ENCODE measurements at regions of chr17 and their contacts with region 1.

Region 1: DNA sequence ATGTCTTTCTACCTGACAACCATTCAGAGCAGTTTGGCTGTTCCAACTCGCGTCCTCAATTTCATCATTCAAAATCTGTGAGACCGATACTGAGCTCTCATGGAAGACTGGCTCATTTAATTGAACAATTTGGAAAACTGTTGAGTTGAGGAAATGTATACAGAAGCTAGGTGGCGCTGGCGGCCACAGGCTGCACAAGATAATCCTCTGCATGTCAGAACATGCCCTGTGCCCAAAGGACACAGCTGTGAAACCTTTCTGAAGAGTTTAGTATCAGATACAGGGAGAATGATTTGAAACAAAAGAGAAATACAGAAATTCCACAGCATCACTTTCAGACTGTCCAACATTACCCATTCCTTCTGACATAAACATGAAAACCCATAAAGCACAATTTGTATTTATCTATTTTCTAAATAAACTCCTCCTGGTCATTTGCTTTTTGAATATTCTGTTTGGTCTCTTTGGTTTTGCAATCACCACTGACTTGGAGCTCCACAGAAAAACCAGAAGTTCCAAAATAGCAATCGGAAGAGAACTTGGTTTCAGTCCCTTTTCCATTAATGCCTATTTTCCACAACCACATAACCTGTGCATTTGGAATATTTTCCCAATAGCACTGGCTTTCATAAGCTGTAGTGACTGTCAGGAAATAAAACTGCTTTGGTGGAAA is 192.8 kb downstream of the MAP2K6 start:
- DNase-seq: peak in 1 of 9 donors; percentile 22
- ATAC-seq: no peak
- H3K4me3 ChIP-seq: no peak overlapping the region
- H3K4me3 Mint-ChIP-seq: peak overlapping the region in 1 of 10 donors; percentile 36
- H3K27ac ChIP-seq: no peak overlapping the region
- H3K27ac Mint-ChIP-seq: peak overlapping the region in 1 of 9 donors; percentile 77
- H3K4me1 ChIP-seq: peaks cover 0 to 6% of the 10 kb centered on the region in 2 donors
- H3K4me1 Mint-ChIP-seq: peaks cover 8 to 42% (median 10%) of the 10 kb centered on the region in 7 donors
- H3K27me3 ChIP-seq: no peaks in the 10 kb centered on the region
- H3K27me3 Mint-ChIP-seq: peaks cover 0 to 18% (median 10%) of the 10 kb centered on the region in 5 donors

Region 2: GRCh38 chr17:69672924-69673323 is 65.6 kb after region 1 on chr17:
- CTCF ChIA-PET with region 1: no interaction called
- POLR2A ChIA-PET with region 1: no interaction called
- intact Hi-C with region 1: no loop called
- DNase-seq: no peak
- ATAC-seq: no peak
- H3K4me3 ChIP-seq: no peak overlapping the region
- H3K4me3 Mint-ChIP-seq: no peak overlapping the region
- H3K27ac ChIP-seq: no peak overlapping the region
- H3K27ac Mint-ChIP-seq: no peak overlapping the region
- H3K4me1 ChIP-seq: no peaks in the 10 kb centered on the region
- H3K4me1 Mint-ChIP-seq: no peaks in the 10 kb centered on the region
- H3K27me3 ChIP-seq: peaks cover 0 to 2% of the 10 kb centered on the region in 2 donors
- H3K27me3 Mint-ChIP-seq: peaks cover 0 to 2% (median 0%) of the 10 kb centered on the region in 5 donors

Region 3: GRCh38 chr17:70137451-70138230 is 530.3 kb after region 1 on chr17:
- CTCF ChIA-PET with region 1: no interaction called
- POLR2A ChIA-PET with region 1: no interaction called
- intact Hi-C with region 1: loop called in 1 of 2 experiments (anchors 2 kb)
- DNase-seq: peak in 2 of 9 donors; percentile 1 to 23
- ATAC-seq: peak; percentile 44
- H3K4me3 ChIP-seq: peak overlapping the region; percentile 2
- H3K4me3 Mint-ChIP-seq: peak overlapping the region; percentile 10 to 79 (median 66)
- H3K27ac ChIP-seq: no peak overlapping the region
- H3K27ac Mint-ChIP-seq: peak overlapping the region in 3 of 9 donors; percentile 13 to 46 (median 22)
- H3K4me1 ChIP-seq: no peaks in the 10 kb centered on the region
- H3K4me1 Mint-ChIP-seq: peaks cover 0 to 13% (median 11%) of the 10 kb centered on the region in 7 donors
- H3K27me3 ChIP-seq: no peaks in the 10 kb centered on the region
- H3K27me3 Mint-ChIP-seq: peaks cover 0 to 2% (median 0%) of the 10 kb centered on the region in 5 donors

Region 4: GRCh38 chr17:70144260-70144846 is 537.1 kb after region 1 on chr17:
- CTCF ChIA-PET with region 1: interaction called, 3 read pairs
- POLR2A ChIA-PET with region 1: no interaction called
- intact Hi-C with region 1: loop called in 1 of 2 experiments (anchors 1 kb)
- DNase-seq: no peak
- ATAC-seq: no peak
- H3K4me3 ChIP-seq: no peak overlapping the region
- H3K4me3 Mint-ChIP-seq: no peak overlapping the region
- H3K27ac ChIP-seq: no peak overlapping the region
- H3K27ac Mint-ChIP-seq: no peak overlapping the region
- H3K4me1 ChIP-seq: no peaks in the 10 kb centered on the region
- H3K4me1 Mint-ChIP-seq: no peaks in the 10 kb centered on the region
- H3K27me3 ChIP-seq: no peaks in the 10 kb centered on the region
- H3K27me3 Mint-ChIP-seq: peaks cover 0 to 18% (median 10%) of the 10 kb centered on the region in 5 donors

Region 5: GRCh38 chr17:70552230-70552981 is 945.1 kb after region 1 on chr17:
- CTCF ChIA-PET with region 1: no interaction called
- POLR2A ChIA-PET with region 1: no interaction called
- intact Hi-C with region 1: loop called in 1 of 2 experiments (anchors 10 kb)
- DNase-seq: peak in 2 of 9 donors; percentile 2 to 9
- ATAC-seq: peak; percentile 42
- H3K4me3 ChIP-seq: no peak overlapping the region
- H3K4me3 Mint-ChIP-seq: no peak overlapping the region
- H3K27ac ChIP-seq: no peak overlapping the region
- H3K27ac Mint-ChIP-seq: no peak overlapping the region
- H3K4me1 ChIP-seq: no peaks in the 10 kb centered on the region
- H3K4me1 Mint-ChIP-seq: no peaks in the 10 kb centered on the region
- H3K27me3 ChIP-seq: no peaks in the 10 kb centered on the region
- H3K27me3 Mint-ChIP-seq: no peaks in the 10 kb centered on the region

Measured in naive thymus-derived CD4-positive, alpha-beta T cell (primary cell).